Activated naive CD8-positive, alpha-beta T cell treated with anti-CD3 and anti-CD28 coated beads, Interleukin-2, amount 10 ng/mL, durations not matched to agents 7 days and 5 days (primary cell): ENCODE measurements at regions of chr19 and their contacts with region 1.

Region 1: DNA sequence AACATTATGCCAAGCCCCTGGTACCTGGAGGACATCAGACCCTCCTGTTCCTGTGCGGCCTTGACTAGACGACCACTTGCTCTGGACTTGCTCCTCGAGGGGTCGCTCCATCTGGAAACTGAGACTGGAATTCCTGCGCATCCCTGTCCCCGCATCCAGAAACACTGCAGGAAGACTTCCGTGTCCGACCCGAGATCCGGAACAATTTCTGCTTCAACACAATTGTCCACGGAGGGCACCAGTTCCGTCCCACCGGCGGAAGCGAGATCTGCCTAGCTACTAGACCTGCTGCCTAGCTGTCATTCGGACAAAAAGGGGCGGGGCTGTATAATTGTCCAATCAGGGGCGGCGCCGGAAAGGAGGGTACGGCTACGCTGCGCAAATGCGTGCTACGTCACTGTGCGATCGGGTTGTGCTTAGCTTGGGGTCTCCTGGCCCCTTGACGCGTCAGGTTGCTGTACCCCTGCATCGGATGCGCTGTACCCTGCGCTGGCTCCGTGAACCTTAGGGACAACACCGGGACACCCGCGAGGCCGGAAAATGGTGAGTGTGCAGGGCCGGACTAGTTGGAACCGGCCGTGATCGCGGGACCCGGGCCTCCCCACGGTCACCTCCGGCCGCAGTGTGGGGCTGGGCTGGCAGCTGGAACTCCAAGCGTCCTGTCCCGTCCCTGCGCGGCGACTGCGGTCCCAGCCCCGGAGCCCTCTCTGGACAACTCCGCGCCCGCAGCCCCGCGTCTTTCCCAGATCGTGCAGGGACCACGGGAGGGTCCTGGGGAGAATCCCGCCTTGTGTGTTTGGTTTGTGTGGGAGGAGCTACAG is at the starts of genes ZNF490 and ZNF791:
- DNase-seq: peak; percentile 91
- ATAC-seq: peak; percentile 88
- H3K4me3 Mint-ChIP-seq: peak within 1 kb of the TSS; percentile 99
- H3K27ac Mint-ChIP-seq: peak within 1 kb of the TSS; percentile 99
- H3K4me1 Mint-ChIP-seq: peaks cover 26% of the 10 kb centered on the region
- H3K27me3 Mint-ChIP-seq: no peaks in the 10 kb centered on the region
- total RNA-seq, gene ZNF490: 14.9 to 17.4 TPM
- total RNA-seq, gene ZNF791: 37.1 to 42.7 TPM

Region 2: GRCh38 chr19:12580163-12580694 is 30.5 kb before region 1 on chr19:
- POLR2A ChIA-PET with region 1: no interaction called
- DNase-seq: no peak
- ATAC-seq: no peak
- H3K4me3 Mint-ChIP-seq: no peak overlapping the region
- H3K27ac Mint-ChIP-seq: no peak overlapping the region
- H3K4me1 Mint-ChIP-seq: no peaks in the 10 kb centered on the region
- H3K27me3 Mint-ChIP-seq: no peaks in the 10 kb centered on the region

Region 3: GRCh38 chr19:12639901-12640613 is 29.3 kb after region 1 on chr19:
- POLR2A ChIA-PET with region 1: interaction called, 12 read pairs
- DNase-seq: peak; percentile 85
- ATAC-seq: peak; percentile 95
- H3K4me3 Mint-ChIP-seq: peak overlapping the region; percentile 67
- H3K27ac Mint-ChIP-seq: peak overlapping the region; percentile 84
- H3K4me1 Mint-ChIP-seq: peaks cover 10% of the 10 kb centered on the region
- H3K27me3 Mint-ChIP-seq: no peaks in the 10 kb centered on the region